ENCODE measurements at regions of chr1 and their contacts with region 1.

Region 1: GRCh38 chr1:160006312-160006940 is 25.4 kb downstream of the PIGM start:
- DNase-seq: no peak
- H3K4me3 ChIP-seq: no peak overlapping the region
- H3K27me3 ChIP-seq: peaks cover 3% of the 10 kb centered on the region
- CTCF ChIP-seq: peak; percentile 98

Region 2: GRCh38 chr1:159798893-159799292 is 207.5 kb before region 1 on chr1:
- CTCF ChIA-PET with region 1: interaction called, 55 read pairs
- POLR2A ChIA-PET with region 1: no interaction called
- DNase-seq: peak; percentile 36
- H3K4me3 ChIP-seq: no peak overlapping the region
- H3K27me3 ChIP-seq: peaks cover 11% of the 10 kb centered on the region
- CTCF ChIP-seq: peak; percentile 77

Region 3: GRCh38 chr1:159891275-159892157 is 114.9 kb before region 1 on chr1:
- CTCF ChIA-PET with region 1: interaction called, 21 read pairs
- POLR2A ChIA-PET with region 1: no interaction called
- DNase-seq: peak; percentile 50
- H3K4me3 ChIP-seq: no peak overlapping the region
- H3K27me3 ChIP-seq: no peaks in the 10 kb centered on the region
- CTCF ChIP-seq: peak; percentile 97

Region 4: GRCh38 chr1:159924981-159925712 is 81.3 kb before region 1 on chr1 and contains the start of gene TAGLN2:
- CTCF ChIA-PET with region 1: interaction called, 889 read pairs
- POLR2A ChIA-PET with region 1: no interaction called
- DNase-seq: peak; percentile 70
- H3K4me3 ChIP-seq: peak within 1 kb of the TSS; percentile 81
- H3K27me3 ChIP-seq: no peaks in the 10 kb centered on the region
- CTCF ChIP-seq: no peak
- polyA plus RNA-seq, gene TAGLN2: 628 and 745 TPM in 2 replicates

Region 5: DNA sequence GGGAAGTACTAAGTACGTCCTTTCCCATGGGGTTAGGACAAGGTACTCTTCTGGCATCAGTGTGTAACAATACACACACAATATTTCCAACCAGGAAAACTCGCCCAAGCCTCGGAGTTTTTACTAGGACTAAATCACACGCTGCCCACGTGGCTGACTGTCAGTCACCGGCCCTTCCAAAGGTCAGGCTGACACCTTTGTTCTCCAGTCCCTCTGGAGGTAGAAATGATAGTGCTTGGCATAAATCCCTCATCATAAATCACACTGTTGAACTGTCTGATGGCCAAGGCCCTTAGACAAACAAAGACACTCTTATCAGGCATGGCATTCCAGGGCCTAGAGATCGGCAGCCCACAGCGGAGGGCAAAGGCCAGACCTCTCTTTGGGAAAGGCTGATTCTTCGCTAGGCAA is 35.5 kb before region 1 on chr1:
- CTCF ChIA-PET with region 1: interaction called, 34 read pairs
- POLR2A ChIA-PET with region 1: no interaction called
- DNase-seq: no peak
- H3K4me3 ChIP-seq: no peak overlapping the region
- H3K27me3 ChIP-seq: peaks cover 3% of the 10 kb centered on the region; the same call in 1 of the 2 replicates
- CTCF ChIP-seq: no peak

Region 6: GRCh38 chr1:160018900-160019299 is 12.5 kb after region 1 on chr1:
- CTCF ChIA-PET with region 1: interaction called, 84 read pairs
- POLR2A ChIA-PET with region 1: no interaction called
- DNase-seq: no peak
- H3K4me3 ChIP-seq: no peak overlapping the region
- H3K27me3 ChIP-seq: no peaks in the 10 kb centered on the region; the same call in none of the 2 replicates
- CTCF ChIP-seq: no peak

Region 7: DNA sequence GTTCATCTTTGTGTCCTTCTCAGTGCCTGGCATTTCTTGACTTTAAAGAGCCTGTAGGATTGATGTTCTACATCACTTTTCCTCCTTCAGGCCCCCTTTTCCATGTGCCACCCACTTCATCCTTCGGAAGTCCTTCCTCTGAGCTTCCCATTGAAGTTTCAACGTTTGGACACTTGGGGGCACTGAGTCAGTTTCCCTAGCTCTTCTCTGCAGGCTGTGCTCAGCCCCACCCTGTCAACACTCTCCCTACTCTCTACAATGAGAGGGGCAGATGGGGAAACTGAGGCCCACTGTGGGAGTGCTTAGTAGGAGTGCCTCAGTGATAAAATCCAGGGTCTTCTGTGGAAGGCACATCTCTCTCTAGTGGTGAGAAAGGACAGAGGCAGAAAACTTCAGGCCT is 51.7 kb after region 1 on chr1:
- CTCF ChIA-PET with region 1: no interaction called
- POLR2A ChIA-PET with region 1: no interaction called
- DNase-seq: no peak
- H3K4me3 ChIP-seq: no peak overlapping the region
- H3K27me3 ChIP-seq: peaks cover 27% of the 10 kb centered on the region
- CTCF ChIP-seq: peak; percentile 50

Region 8: GRCh38 chr1:160078512-160079195 is 72.2 kb after region 1 on chr1:
- CTCF ChIA-PET with region 1: interaction called, 10 read pairs
- POLR2A ChIA-PET with region 1: interaction called, 3 read pairs
- DNase-seq: no peak
- H3K4me3 ChIP-seq: no peak overlapping the region
- H3K27me3 ChIP-seq: peaks cover 37% of the 10 kb centered on the region
- CTCF ChIP-seq: peak; percentile 84

Region 9: GRCh38 chr1:160219062-160219929 is 212.9 kb after region 1 on chr1:
- CTCF ChIA-PET with region 1: no interaction called
- POLR2A ChIA-PET with region 1: no interaction called
- DNase-seq: peak; percentile 50
- H3K4me3 ChIP-seq: no peak overlapping the region
- H3K27me3 ChIP-seq: no peaks in the 10 kb centered on the region
- CTCF ChIP-seq: peak; percentile 74